ENCODE measurements at regions of chr12 and their contacts with region 1.

Region 1: GRCh38 chr12:8890313-8891085 is 23.8 kb upstream of the PHC1 start:
- DNase-seq: peak; percentile 75
- ATAC-seq: peak; percentile 74
- H3K4me3 Mint-ChIP-seq: peak overlapping the region; percentile 72
- H3K27ac Mint-ChIP-seq: no peak overlapping the region
- H3K4me1 Mint-ChIP-seq: peaks cover 3% of the 10 kb centered on the region
- H3K27me3 Mint-ChIP-seq: no peaks in the 10 kb centered on the region

Region 2: GRCh38 chr12:8662593-8662992 is 227.9 kb before region 1 on chr12 and contains the start of gene MFAP5:
- CTCF ChIA-PET with region 1: interaction called, 21 read pairs
- POLR2A ChIA-PET with region 1: no interaction called
- intact Hi-C with region 1: loop called (anchors 1 to 5 kb)
- DNase-seq: no peak
- ATAC-seq: no peak
- H3K4me3 Mint-ChIP-seq: no peak within 1 kb of the TSS
- H3K27ac Mint-ChIP-seq: no peak within 1 kb of the TSS
- H3K4me1 Mint-ChIP-seq: no peaks in the 10 kb centered on the region
- H3K27me3 Mint-ChIP-seq: peaks cover 4% of the 10 kb centered on the region
- total RNA-seq, gene MFAP5: not detected

Region 3: DNA sequence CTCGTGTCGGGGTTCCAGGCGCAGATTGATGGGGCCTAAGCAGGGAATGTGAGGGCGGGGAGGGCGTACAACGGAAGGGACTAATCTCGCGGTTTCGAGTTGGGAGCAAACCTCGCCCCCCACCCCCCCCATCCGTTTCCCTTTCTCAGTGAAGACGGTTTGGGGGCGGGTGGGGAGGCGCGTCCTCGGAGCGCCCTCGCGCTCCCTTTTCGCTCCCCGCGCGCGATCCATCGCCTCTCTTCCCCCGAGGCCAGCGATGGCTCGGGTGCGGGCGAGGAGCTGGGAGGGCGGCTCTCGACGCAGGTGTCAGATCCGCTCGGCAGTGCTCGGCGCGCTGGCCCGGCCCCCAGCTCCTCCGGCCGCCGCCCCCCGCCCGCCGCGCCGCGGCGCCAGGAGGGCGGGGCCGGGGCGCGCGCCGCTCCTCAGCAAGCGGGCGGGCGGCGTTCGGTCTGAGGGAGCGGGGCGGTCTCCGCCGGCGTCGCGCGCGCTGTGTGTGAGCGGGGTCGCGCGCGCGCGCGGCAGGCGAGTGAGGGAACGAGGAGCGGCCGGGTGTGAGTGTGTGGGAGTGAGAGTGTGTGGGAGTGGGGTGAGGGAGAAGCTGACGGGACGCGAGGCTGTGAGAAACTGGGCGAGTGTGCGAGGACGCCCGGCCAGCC is 192.9 kb before region 1 on chr12 and contains the start of gene RIMKLB:
- CTCF ChIA-PET with region 1: interaction called, 7 read pairs
- POLR2A ChIA-PET with region 1: no interaction called
- intact Hi-C with region 1: loop called in 1 of 2 experiments (anchors 5 kb)
- DNase-seq: peak; percentile 82
- ATAC-seq: peak; percentile 93
- H3K4me3 Mint-ChIP-seq: peak within 1 kb of the TSS; percentile 86
- H3K27ac Mint-ChIP-seq: peak within 1 kb of the TSS; percentile 85
- H3K4me1 Mint-ChIP-seq: peaks cover 18% of the 10 kb centered on the region
- H3K27me3 Mint-ChIP-seq: peaks cover 2% of the 10 kb centered on the region
- total RNA-seq, gene RIMKLB: 5.2 to 5.3 TPM

Region 4: DNA sequence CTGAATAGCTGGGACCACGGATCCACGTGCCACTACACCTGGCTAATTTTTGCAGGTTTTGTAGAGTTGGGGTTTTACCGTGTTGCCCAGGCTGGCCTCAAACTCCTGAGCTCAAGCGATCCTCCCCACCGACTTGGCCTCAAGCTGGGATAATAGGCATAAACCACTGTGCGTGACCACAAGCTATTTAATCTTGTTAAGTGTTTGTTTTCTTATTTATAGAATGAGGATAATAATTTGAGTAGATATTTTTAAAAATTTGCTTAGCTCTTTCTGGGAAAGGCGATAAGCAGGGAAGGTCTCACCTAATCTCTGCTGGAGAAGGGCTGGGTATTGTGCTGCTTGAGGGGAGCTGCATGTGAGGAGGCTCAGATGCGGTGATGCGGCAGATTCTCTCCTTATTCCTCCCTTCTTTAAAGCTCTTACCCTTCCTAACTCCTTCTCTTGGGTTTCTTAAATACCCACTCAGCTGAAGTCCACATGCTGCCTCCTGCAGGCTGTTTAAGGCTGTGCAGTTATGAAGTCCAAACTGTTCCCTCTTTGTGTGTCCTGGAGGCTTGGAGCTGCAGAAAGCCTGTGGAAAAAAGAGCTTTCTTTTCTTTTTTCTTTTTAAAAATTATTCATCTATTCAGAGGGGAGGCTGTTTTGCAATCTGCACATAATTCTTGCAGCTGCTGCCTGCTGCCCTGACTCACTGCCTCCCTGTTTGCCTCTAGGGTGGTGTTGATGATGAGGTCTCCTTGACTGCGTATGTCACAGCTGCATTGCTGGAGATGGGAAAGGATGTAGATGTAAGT is 30.1 kb before region 1 on chr12:
- CTCF ChIA-PET with region 1: interaction called, 18 read pairs
- POLR2A ChIA-PET with region 1: no interaction called
- intact Hi-C with region 1: no loop called
- DNase-seq: peak; percentile 51
- ATAC-seq: peak; percentile 71
- H3K4me3 Mint-ChIP-seq: no peak overlapping the region
- H3K27ac Mint-ChIP-seq: no peak overlapping the region
- H3K4me1 Mint-ChIP-seq: no peaks in the 10 kb centered on the region
- H3K27me3 Mint-ChIP-seq: no peaks in the 10 kb centered on the region

Region 5: GRCh38 chr12:8914716-8915526 is 24.4 kb after region 1 on chr12:
- CTCF ChIA-PET with region 1: interaction called, 10 read pairs
- POLR2A ChIA-PET with region 1: no interaction called
- intact Hi-C with region 1: no loop called
- DNase-seq: peak; percentile 69
- ATAC-seq: peak; percentile 82
- H3K4me3 Mint-ChIP-seq: no peak overlapping the region
- H3K27ac Mint-ChIP-seq: no peak overlapping the region
- H3K4me1 Mint-ChIP-seq: peaks cover 12% of the 10 kb centered on the region
- H3K27me3 Mint-ChIP-seq: no peaks in the 10 kb centered on the region

Measured in activated CD4-positive, alpha-beta T cell treated with anti-CD3 and anti-CD28 coated beads for 36 hours (primary cell).